CD4-positive, alpha-beta T cell (primary cell): ENCODE measurements at regions of chr5 and their contacts with region 1.

Region 1: DNA sequence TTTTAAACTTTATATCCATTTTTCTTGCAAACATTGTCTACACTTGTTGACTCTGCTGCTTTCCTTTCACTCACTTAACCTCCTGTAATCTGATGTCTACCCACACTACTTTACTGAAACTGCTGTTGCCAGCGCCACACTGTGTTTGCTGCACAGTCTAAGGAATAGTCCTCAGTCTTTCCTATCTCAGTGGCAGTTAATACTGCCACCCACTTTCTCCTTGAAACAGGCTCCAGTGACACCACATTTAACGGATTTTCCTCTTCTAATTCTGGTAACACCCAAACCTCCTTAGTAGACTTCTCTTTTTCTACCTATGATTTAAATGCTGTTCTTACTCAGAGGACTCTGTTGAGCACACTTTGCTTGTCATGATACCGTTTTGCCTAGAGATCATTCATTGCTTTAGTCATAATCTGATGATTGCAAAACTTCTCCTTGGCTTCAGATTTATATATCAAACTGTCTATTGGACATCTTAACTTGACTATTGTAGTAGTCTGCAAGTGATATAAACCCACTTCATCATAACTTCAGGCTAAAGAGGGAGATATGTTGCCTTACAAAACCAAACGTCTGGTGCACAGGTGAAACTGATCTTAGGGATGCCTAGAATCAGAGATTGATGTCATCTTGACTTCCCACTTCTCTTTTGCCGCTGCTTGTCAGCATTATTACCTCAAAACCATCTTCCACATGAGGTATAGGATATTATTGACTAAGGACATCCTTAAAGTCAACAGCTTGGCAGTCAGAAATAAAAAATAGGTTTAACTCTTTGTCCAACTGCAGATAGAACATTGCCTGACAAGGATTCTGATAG is 94.1 kb downstream of the CDC42SE2 start:
- DNase-seq: peak in 5 of 14 experiments; percentile 27 to 67 (median 61)
- ATAC-seq: peak; percentile 64
- H3K4me3 ChIP-seq: no peak overlapping the region
- H3K4me3 Mint-ChIP-seq: peak overlapping the region; percentile 70
- H3K27ac ChIP-seq: peak overlapping the region; percentile 5 to 57
- H3K27ac Mint-ChIP-seq: peak overlapping the region; percentile 88
- H3K4me1 ChIP-seq: peaks cover 40% of the 10 kb centered on the region
- H3K4me1 Mint-ChIP-seq: peaks cover 85% of the 10 kb centered on the region
- H3K27me3 ChIP-seq: no peaks in the 10 kb centered on the region
- H3K27me3 Mint-ChIP-seq: no peaks in the 10 kb centered on the region
- CTCF ChIP-seq: no peak

Region 2: GRCh38 chr5:131338051-131338453 is 19.9 kb before region 1 on chr5:
- CTCF ChIA-PET with region 1: no interaction called
- POLR2A ChIA-PET with region 1: interaction called, 3 read pairs
- intact Hi-C with region 1: loop called in 1 of 2 experiments (anchors 2 kb)
- DNase-seq: no peak
- ATAC-seq: no peak
- H3K4me3 ChIP-seq: no peak overlapping the region
- H3K4me3 Mint-ChIP-seq: peak overlapping the region; percentile 34
- H3K27ac ChIP-seq: peak overlapping the region in 1 of 2 donors; percentile 64
- H3K27ac Mint-ChIP-seq: peak overlapping the region; percentile 77
- H3K4me1 ChIP-seq: peaks cover 43% of the 10 kb centered on the region
- H3K4me1 Mint-ChIP-seq: peaks cover 83% of the 10 kb centered on the region
- H3K27me3 ChIP-seq: no peaks in the 10 kb centered on the region
- H3K27me3 Mint-ChIP-seq: no peaks in the 10 kb centered on the region
- CTCF ChIP-seq: no peak

Region 3: DNA sequence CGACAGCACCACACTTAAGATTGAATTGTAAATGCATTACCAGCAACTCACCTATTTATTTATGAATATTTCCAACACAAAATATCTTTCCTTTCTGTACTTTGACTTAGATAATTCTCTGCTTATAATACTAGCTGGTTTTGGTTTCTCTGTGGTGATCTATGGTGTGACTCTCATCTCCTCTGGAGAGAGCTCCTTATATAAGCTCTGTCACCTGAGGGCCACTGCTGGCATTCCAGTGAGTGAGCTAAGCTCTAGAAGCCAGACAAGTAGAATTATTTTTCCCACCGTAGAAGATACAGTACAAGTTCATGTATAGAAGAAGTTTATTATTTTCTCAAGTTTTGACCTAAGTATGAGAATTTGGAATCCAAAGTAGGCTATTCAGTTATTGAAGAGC is 17.4 kb after region 1 on chr5:
- CTCF ChIA-PET with region 1: interaction called, 6 read pairs
- POLR2A ChIA-PET with region 1: interaction called, 17 read pairs
- intact Hi-C with region 1: loop called (anchors 2 kb)
- DNase-seq: peak in 3 of 14 experiments; percentile 57 to 73 (median 63)
- ATAC-seq: no peak
- H3K4me3 ChIP-seq: no peak overlapping the region
- H3K4me3 Mint-ChIP-seq: peak overlapping the region; percentile 52
- H3K27ac ChIP-seq: peak overlapping the region; percentile 55 to 56
- H3K27ac Mint-ChIP-seq: peak overlapping the region; percentile 97
- H3K4me1 ChIP-seq: peaks cover 49% of the 10 kb centered on the region
- H3K4me1 Mint-ChIP-seq: peaks cover 92% of the 10 kb centered on the region
- H3K27me3 ChIP-seq: no peaks in the 10 kb centered on the region
- H3K27me3 Mint-ChIP-seq: no peaks in the 10 kb centered on the region
- CTCF ChIP-seq: no peak